H1 (cell line): ENCODE measurements at regions of chr20 and their contacts with region 1.

Region 1: GRCh38 chr20:32031007-32031958 is 20.8 kb upstream of the HCK start:
- DNase-seq: peak; percentile 96
- H3K4me3 ChIP-seq: peak overlapping the region in 3 of 4 experiments; percentile 1 to 49 (median 23); a peak in 4 of 8 replicates
- H3K27ac ChIP-seq: no peak overlapping the region
- H3K4me1 ChIP-seq: peaks cover 0 to 7% (median 5%) of the 10 kb centered on the region in 4 experiments; a peak in 6 of 7 replicates
- H3K27me3 ChIP-seq: peaks cover 0 to 6% (median 0%) of the 10 kb centered on the region in 4 experiments; a peak in 2 of 7 replicates
- CTCF ChIP-seq: peak; percentile 78 to 93 (median 89)
- EP300 ChIP-seq: no peak
- POLR2A ChIP-seq: 0 out of 3 replicates have a peak, but pooled peaks of 1 of the 2 experiments have one; percentile 22
- RAD21 ChIP-seq: peak; percentile 89 to 90

Region 2: DNA sequence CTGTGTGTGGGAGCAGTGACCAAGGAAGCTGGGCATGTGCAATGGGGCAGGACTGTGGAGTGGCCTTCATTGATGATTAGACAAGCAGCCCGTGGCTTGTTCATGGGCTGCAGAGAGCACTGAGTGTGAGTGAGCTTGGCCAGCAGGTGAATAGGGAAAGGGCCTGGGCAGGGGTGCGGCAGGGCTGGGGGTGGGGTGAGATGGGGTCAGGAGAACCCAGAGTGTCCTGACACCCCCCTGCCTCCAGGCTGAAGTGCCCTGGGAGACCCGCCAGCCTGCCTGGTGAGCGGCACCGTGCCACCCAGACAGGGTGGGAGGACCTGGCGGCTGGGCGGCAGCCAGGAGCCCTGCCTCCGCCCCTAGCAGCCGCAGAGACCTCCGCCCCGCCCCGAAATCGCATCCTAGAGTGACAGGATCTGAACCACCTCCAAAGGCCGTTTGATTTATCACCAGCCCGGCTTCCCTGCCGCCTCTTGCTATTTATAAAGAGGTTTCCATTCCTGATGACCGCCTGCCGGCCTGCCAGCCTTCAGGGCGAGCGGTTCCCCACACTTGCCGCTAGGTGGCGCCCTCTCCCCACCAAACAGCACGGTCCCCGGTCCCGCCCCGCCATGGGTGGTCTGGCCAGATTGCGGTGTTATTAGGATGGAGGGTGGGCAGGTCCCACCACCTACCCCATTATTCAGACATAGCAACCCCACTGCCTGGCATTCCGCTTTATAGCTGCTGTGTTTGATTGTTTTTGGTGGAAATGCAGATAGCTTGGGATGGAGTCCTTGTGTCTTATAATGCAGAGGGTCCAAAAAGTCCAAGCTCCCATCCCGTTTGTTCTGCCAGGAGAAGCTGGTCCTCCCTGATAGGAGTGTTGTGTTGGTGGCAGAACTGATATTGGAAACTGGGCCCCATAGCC is 208.6 kb before region 1 on chr20:
- CTCF ChIA-PET with region 1: interaction called, 51 read pairs
- POLR2A ChIA-PET with region 1: no interaction called
- DNase-seq: peak; percentile 49 to 97
- H3K4me3 ChIP-seq: peak overlapping the region in 2 of 4 experiments; percentile 5 to 35; a peak in 2 of 8 replicates
- H3K27ac ChIP-seq: no peak overlapping the region
- H3K4me1 ChIP-seq: peaks cover 0 to 8% (median 2%) of the 10 kb centered on the region in 4 experiments; a peak in 4 of 7 replicates
- H3K27me3 ChIP-seq: no peaks in the 10 kb centered on the region
- CTCF ChIP-seq: peak; percentile 97 to 100 (median 98)
- EP300 ChIP-seq: peak in 1 of 2 experiments; percentile 83; a peak in 1 of 3 replicates
- POLR2A ChIP-seq: no peak
- RAD21 ChIP-seq: peak; percentile 100

Region 3: GRCh38 chr20:31861346-31862156 is 169.7 kb before region 1 on chr20:
- CTCF ChIA-PET with region 1: interaction called, 105 read pairs
- POLR2A ChIA-PET with region 1: interaction called, 3 read pairs
- DNase-seq: peak; percentile 60 to 88
- H3K4me3 ChIP-seq: peak overlapping the region; percentile 60 to 89 (median 84)
- H3K27ac ChIP-seq: peak overlapping the region; percentile 13
- H3K4me1 ChIP-seq: peaks cover 3 to 28% (median 14%) of the 10 kb centered on the region in 4 experiments
- H3K27me3 ChIP-seq: peaks cover 0 to 17% (median 14%) of the 10 kb centered on the region in 4 experiments; a peak in 5 of 7 replicates
- CTCF ChIP-seq: no peak
- EP300 ChIP-seq: no peak
- POLR2A ChIP-seq: peak in 1 of 2 experiments; percentile 21; a peak in 1 of 3 replicates
- RAD21 ChIP-seq: 0 out of 4 replicates have a peak, but pooled peaks of 1 of the 2 experiments have one; percentile 4

Region 4: GRCh38 chr20:31951530-31952453 is 79.5 kb before region 1 on chr20 and contains the start of gene PDRG1:
- CTCF ChIA-PET with region 1: interaction called, 33 read pairs
- POLR2A ChIA-PET with region 1: no interaction called
- DNase-seq: peak; percentile 94 to 99
- H3K4me3 ChIP-seq: peak within 1 kb of the TSS; percentile 51 to 97 (median 89)
- H3K27ac ChIP-seq: peak within 1 kb of the TSS; percentile 22
- H3K4me1 ChIP-seq: peaks cover 0 to 6% (median 1%) of the 10 kb centered on the region in 4 experiments; a peak in 3 of 7 replicates
- H3K27me3 ChIP-seq: no peaks in the 10 kb centered on the region
- CTCF ChIP-seq: peak; percentile 95 to 99 (median 97)
- EP300 ChIP-seq: no peak
- POLR2A ChIP-seq: peak; percentile 77 to 91
- RAD21 ChIP-seq: peak; percentile 93 to 98
- total RNA-seq, gene PDRG1: 14.2 and 14.5 TPM in 2 replicates

Region 5: GRCh38 chr20:31990641-31991338 is 40.5 kb before region 1 on chr20:
- CTCF ChIA-PET with region 1: interaction called, 17 read pairs
- POLR2A ChIA-PET with region 1: no interaction called
- DNase-seq: no peak
- H3K4me3 ChIP-seq: no peak overlapping the region
- H3K27ac ChIP-seq: no peak overlapping the region
- H3K4me1 ChIP-seq: peaks cover 0 to 13% (median 8%) of the 10 kb centered on the region in 4 experiments; a peak in 4 of 7 replicates
- H3K27me3 ChIP-seq: peaks cover 2 to 34% (median 27%) of the 10 kb centered on the region in 4 experiments
- CTCF ChIP-seq: no peak
- EP300 ChIP-seq: no peak
- POLR2A ChIP-seq: no peak
- RAD21 ChIP-seq: no peak

Region 6: GRCh38 chr20:32052090-32052777 is 21.0 kb after region 1 on chr20 and contains the start of gene HCK:
- CTCF ChIA-PET with region 1: interaction called, 22 read pairs
- POLR2A ChIA-PET with region 1: no interaction called
- DNase-seq: peak in 1 of 2 experiments; percentile 58
- H3K4me3 ChIP-seq: peak within 1 kb of the TSS; percentile 35 to 75 (median 66)
- H3K27ac ChIP-seq: no peak within 1 kb of the TSS
- H3K4me1 ChIP-seq: peaks cover 2 to 10% (median 6%) of the 10 kb centered on the region in 4 experiments; a peak in 5 of 7 replicates
- H3K27me3 ChIP-seq: peaks cover 3 to 45% (median 33%) of the 10 kb centered on the region in 4 experiments
- CTCF ChIP-seq: no peak
- EP300 ChIP-seq: no peak
- POLR2A ChIP-seq: no peak
- RAD21 ChIP-seq: no peak
- total RNA-seq, gene HCK: 0.37 and 0.82 TPM in 2 replicates

Region 7: GRCh38 chr20:32119734-32120133 is 88.5 kb after region 1 on chr20:
- CTCF ChIA-PET with region 1: no interaction called
- POLR2A ChIA-PET with region 1: no interaction called
- DNase-seq: no peak
- H3K4me3 ChIP-seq: no peak overlapping the region
- H3K27ac ChIP-seq: no peak overlapping the region
- H3K4me1 ChIP-seq: peaks cover 0 to 6% (median 4%) of the 10 kb centered on the region in 4 experiments; a peak in 4 of 7 replicates
- H3K27me3 ChIP-seq: no peaks in the 10 kb centered on the region
- CTCF ChIP-seq: no peak
- EP300 ChIP-seq: no peak
- POLR2A ChIP-seq: no peak
- RAD21 ChIP-seq: no peak